Head of caudate nucleus (tissue), 42 donors: ENCODE measurements at regions of chr2 and their contacts with region 1.

Region 1: DNA sequence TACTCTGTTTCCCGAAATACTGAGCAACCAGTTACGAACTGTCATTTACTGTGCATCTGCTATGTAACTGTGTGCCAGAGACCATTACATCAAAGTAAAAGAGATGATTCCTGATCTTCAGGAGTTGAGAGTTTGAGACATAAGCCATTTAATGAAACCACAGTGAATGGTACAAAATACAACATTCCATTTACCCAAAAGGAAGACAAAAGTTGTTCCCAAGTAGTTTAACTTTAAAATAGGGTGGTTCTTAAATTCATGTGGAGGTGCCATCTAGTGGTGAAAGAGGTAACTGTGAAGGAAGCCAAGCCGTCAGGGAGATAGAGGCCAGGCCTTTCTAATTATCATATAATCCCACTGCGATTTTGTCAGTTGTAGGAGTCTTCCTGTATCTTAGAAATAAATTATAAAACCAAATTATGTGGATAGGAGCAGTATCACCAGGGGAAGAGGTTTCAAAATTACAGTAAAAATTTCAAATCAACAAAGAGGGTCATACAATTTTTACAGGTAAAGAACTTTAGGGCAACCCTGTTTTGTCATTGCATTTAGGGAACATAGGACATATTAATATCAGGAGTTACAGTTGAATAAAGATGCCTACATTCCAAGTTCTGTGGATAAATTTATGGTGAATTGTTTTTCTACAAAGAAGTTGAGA is 67.7 kb downstream of the EPAS1 start:
- DNase-seq: peak in 11 of 42 donors; percentile 27 to 76 (median 42)

Region 2: GRCh38 chr2:46010925-46011490 is 353.9 kb before region 1 on chr2:
- intact Hi-C with region 1: loop called (anchors 10 kb)
- DNase-seq: no peak

Region 3: DNA sequence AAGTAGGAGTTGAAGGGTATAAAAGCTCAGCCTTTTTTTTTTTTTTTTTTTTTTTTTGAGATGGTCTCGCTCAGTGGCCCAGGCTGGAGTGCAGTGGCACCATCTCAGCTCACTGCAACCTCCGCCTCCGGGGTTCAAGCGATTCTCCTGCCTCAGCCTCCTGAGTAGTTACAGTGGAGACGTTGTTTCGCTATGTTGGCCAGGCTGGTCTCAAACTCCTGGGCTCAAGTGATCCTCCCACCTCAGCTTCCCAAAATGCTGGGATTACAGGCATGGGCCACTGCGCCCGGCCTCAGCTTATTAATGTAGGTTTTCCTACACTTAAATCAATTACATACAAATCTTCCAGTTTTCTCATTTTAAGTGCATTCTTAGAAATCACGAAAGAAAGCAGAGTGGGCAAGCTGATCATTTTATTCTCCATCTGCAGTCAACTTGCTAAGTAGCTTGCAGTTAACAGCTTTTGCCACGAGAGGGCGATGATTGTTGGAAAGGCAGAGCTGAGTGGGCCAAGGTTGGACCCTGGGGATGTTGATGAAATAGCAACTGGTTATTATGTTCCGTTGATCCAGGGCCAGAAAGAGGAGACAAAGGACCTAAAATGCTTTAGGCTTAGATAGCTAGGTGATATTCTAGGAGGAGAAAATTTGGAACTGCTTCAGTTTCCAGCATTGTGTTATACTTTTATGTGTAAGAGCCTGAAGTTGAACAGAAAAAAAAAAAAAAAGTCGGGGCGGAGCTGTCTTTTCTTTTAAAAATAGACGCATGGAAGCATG is 302.1 kb before region 1 on chr2:
- intact Hi-C with region 1: loop called (anchors 10 kb)
- DNase-seq: peak; percentile 32 to 92 (median 80)

Region 4: GRCh38 chr2:46521215-46521683 is 156.3 kb after region 1 on chr2:
- intact Hi-C with region 1: no loop called
- DNase-seq: peak in 6 of 42 donors; percentile 17 to 37 (median 26)